ENCODE measurements at regions of chr11 and their contacts with region 1.

Region 1: GRCh38 chr11:6757373-6757967 is 14.3 kb downstream of the OR2AG2 start:
- DNase-seq: peak; percentile 40
- H3K4me3 Mint-ChIP-seq: no peak overlapping the region
- H3K27ac Mint-ChIP-seq: no peak overlapping the region
- H3K4me1 Mint-ChIP-seq: no peaks in the 10 kb centered on the region
- H3K27me3 Mint-ChIP-seq: peaks cover 15% of the 10 kb centered on the region

Region 2: GRCh38 chr11:6377902-6378639 is 379.4 kb before region 1 on chr11:
- intact Hi-C with region 1: loop called (anchors 5 kb)
- DNase-seq: no peak
- H3K4me3 Mint-ChIP-seq: peak overlapping the region; percentile 19
- H3K27ac Mint-ChIP-seq: peak overlapping the region; percentile 44
- H3K4me1 Mint-ChIP-seq: peaks cover 33% of the 10 kb centered on the region
- H3K27me3 Mint-ChIP-seq: peaks cover 4% of the 10 kb centered on the region

Region 3: GRCh38 chr11:6419009-6419631 is 338.4 kb before region 1 on chr11 and contains the start of gene APBB1:
- intact Hi-C with region 1: no loop called
- DNase-seq: peak; percentile 63
- H3K4me3 Mint-ChIP-seq: peak within 1 kb of the TSS; percentile 77
- H3K27ac Mint-ChIP-seq: no peak within 1 kb of the TSS
- H3K4me1 Mint-ChIP-seq: no peaks in the 10 kb centered on the region
- H3K27me3 Mint-ChIP-seq: peaks cover 32% of the 10 kb centered on the region
- total RNA-seq, gene APBB1: 16.5 and 16.8 TPM in 2 replicates

Region 4: DNA sequence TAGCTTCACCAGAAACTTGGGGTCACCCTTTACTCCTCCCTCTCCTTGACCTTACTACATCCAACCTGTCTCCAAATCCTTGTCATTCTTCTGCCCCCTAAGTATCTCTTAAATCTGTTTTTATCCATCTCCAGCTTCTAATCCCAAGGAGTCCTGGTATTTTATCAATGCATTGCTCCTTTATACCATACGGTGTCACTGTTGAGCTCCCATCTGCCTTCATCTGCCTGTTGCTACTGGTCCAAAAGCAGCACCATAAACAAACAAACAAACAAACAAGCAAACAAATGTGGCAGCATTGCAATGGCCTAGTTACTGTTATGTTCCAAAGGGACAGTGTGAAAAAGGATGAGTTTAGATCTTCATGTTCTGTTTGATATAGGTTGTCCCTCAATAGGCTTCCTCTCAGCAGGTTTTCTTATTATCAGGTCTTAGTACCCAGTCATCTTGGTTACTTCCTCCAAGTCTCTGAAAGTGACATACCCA is 226.2 kb before region 1 on chr11:
- intact Hi-C with region 1: loop called (anchors 1 kb)
- DNase-seq: peak; percentile 16
- H3K4me3 Mint-ChIP-seq: no peak overlapping the region
- H3K27ac Mint-ChIP-seq: no peak overlapping the region
- H3K4me1 Mint-ChIP-seq: peaks cover 12% of the 10 kb centered on the region
- H3K27me3 Mint-ChIP-seq: no peaks in the 10 kb centered on the region

Region 5: GRCh38 chr11:6705905-6706535 is 51.5 kb before region 1 on chr11:
- intact Hi-C with region 1: loop called (anchors 1 kb)
- DNase-seq: peak; percentile 19
- H3K4me3 Mint-ChIP-seq: no peak overlapping the region
- H3K27ac Mint-ChIP-seq: no peak overlapping the region
- H3K4me1 Mint-ChIP-seq: peaks cover 7% of the 10 kb centered on the region
- H3K27me3 Mint-ChIP-seq: no peaks in the 10 kb centered on the region

Region 6: GRCh38 chr11:6737872-6738466 is 19.5 kb before region 1 on chr11:
- intact Hi-C with region 1: loop called (anchors 1 kb)
- DNase-seq: peak; percentile 52
- H3K4me3 Mint-ChIP-seq: no peak overlapping the region
- H3K27ac Mint-ChIP-seq: no peak overlapping the region
- H3K4me1 Mint-ChIP-seq: peaks cover 71% of the 10 kb centered on the region
- H3K27me3 Mint-ChIP-seq: no peaks in the 10 kb centered on the region

Region 7: DNA sequence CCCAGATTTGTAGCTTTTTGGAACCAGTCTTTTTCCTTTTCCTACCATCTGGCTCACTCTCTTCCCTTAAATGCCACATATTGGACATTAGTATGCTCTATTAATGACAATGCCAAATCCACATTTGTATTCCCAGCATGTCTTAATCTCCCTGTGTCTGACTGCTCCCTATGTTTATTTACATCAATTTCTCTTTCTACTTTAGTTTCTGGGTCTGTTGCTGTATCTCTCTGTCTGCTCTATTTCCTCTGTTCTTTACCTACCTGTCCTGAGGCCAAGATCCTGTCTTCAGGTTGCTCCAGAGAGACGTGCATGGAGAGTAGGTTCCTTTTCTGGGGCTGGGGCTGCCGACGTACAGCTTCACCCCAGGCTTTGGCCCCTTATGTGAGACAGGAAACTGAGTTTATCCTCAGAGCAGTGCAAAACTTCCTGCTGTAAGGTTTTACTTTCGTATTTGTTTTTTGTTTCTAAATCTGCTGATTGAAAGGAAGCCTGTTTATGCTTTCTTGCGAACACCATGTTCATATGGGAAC is 11.3 kb before region 1 on chr11:
- intact Hi-C with region 1: loop called (anchors 1 kb)
- DNase-seq: peak; percentile 40
- H3K4me3 Mint-ChIP-seq: no peak overlapping the region
- H3K27ac Mint-ChIP-seq: no peak overlapping the region
- H3K4me1 Mint-ChIP-seq: no peaks in the 10 kb centered on the region
- H3K27me3 Mint-ChIP-seq: no peaks in the 10 kb centered on the region